ENCODE measurements at regions of chr5 and their contacts with region 1.

Region 1: GRCh38 chr5:171131497-171131896 is 177.6 kb upstream of the TLX3 start:
- DNase-seq: no peak
- H3K4me3 ChIP-seq: no peak overlapping the region
- H3K27ac ChIP-seq: no peak overlapping the region
- H3K4me1 ChIP-seq: peaks cover 0 to 11% of the 10 kb centered on the region in 2 experiments; a peak in 2 of 4 replicates
- H3K27me3 ChIP-seq: no peaks in the 10 kb centered on the region
- CTCF ChIP-seq: no peak
- EP300 ChIP-seq: no peak
- RAD21 ChIP-seq: no peak

Region 2: DNA sequence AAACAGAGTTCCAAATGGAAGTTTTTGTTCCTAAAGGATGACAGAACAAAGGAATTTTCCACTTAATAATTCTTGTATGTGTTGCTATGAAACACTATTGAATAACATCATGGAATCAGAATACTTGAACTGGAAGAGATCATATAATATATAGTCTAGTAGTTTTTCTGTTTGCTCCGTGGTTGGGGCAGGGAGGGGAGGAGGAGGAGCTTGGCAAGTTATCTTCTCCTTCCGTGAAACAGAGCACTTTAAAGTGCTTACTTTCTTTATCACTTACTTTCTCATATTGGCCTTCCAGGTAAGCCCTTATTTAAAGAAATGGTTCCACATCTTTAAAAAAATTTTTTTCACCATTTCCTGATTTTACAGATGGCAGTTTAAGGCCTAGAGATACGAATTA is 11.7 kb after region 1 on chr5:
- CTCF ChIA-PET with region 1: interaction called, 12 read pairs
- POLR2A ChIA-PET with region 1: interaction called, 3 read pairs
- DNase-seq: no peak
- H3K4me3 ChIP-seq: no peak overlapping the region
- H3K27ac ChIP-seq: no peak overlapping the region
- H3K4me1 ChIP-seq: no peaks in the 10 kb centered on the region; a peak in 1 of 4 replicates
- H3K27me3 ChIP-seq: no peaks in the 10 kb centered on the region
- CTCF ChIP-seq: no peak
- EP300 ChIP-seq: no peak
- RAD21 ChIP-seq: no peak